ENCODE measurements at regions of chr3 and their contacts with region 1.

Region 1: GRCh38 chr3:115092220-115092791 is 54.8 kb downstream of the ZBTB20 start:
- DNase-seq: peak; percentile 55
- ATAC-seq: peak; percentile 100
- H3K4me3 ChIP-seq: no peak overlapping the region
- H3K27ac ChIP-seq: no peak overlapping the region
- H3K4me1 ChIP-seq: no peaks in the 10 kb centered on the region
- H3K27me3 ChIP-seq: 0 out of 2 replicates have a peak, but pooled peaks cover 5% of the 10 kb centered on the region
- CTCF ChIP-seq: peak; percentile 77

Region 2: DNA sequence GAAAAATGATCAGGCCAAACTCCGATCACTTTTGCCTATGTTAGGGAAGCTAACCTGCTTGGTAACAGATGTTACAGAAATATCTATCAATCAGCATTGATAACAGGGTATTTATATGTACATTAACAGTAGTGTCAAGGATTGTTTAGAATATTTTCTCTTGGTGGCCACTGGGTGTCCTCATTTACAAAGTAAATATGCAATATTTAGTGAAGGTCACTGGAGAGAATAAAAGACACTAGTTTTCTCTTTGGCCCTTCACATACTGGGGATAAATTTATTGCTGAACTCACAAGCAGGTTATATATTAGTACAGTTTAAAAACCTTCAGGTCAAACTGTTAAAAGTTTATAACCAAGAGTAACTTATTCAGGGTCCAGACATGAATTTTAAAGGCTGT is 729.5 kb before region 1 on chr3:
- CTCF ChIA-PET with region 1: no interaction called
- POLR2A ChIA-PET with region 1: no interaction called
- intact Hi-C with region 1: loop called (anchors 5 kb)
- DNase-seq: peak; percentile 37
- ATAC-seq: peak; percentile 81
- H3K4me3 ChIP-seq: no peak overlapping the region
- H3K27ac ChIP-seq: no peak overlapping the region
- H3K4me1 ChIP-seq: no peaks in the 10 kb centered on the region
- H3K27me3 ChIP-seq: peaks cover 6% of the 10 kb centered on the region
- CTCF ChIP-seq: peak; percentile 74

Region 3: GRCh38 chr3:114827495-114827894 is 264.8 kb before region 1 on chr3:
- CTCF ChIA-PET with region 1: interaction called, 6 read pairs
- POLR2A ChIA-PET with region 1: no interaction called
- intact Hi-C with region 1: loop called (anchors 1 kb)
- DNase-seq: peak; percentile 51
- ATAC-seq: peak; percentile 86
- H3K4me3 ChIP-seq: no peak overlapping the region
- H3K27ac ChIP-seq: no peak overlapping the region
- H3K4me1 ChIP-seq: no peaks in the 10 kb centered on the region
- H3K27me3 ChIP-seq: no peaks in the 10 kb centered on the region
- CTCF ChIP-seq: peak; percentile 68

Region 4: GRCh38 chr3:115147329-115148141 is 55.2 kb after region 1 on chr3:
- CTCF ChIA-PET with region 1: no interaction called
- POLR2A ChIA-PET with region 1: no interaction called
- intact Hi-C with region 1: loop called (anchors 2 kb)
- DNase-seq: peak; percentile 99
- ATAC-seq: peak; percentile 83
- H3K4me3 ChIP-seq: peak overlapping the region; percentile 84
- H3K27ac ChIP-seq: peak overlapping the region; percentile 29
- H3K4me1 ChIP-seq: peaks cover 7% of the 10 kb centered on the region; the same call in 1 of the 2 replicates
- H3K27me3 ChIP-seq: no peaks in the 10 kb centered on the region
- CTCF ChIP-seq: no peak

Region 5: GRCh38 chr3:115692887-115693524 is 600.7 kb after region 1 on chr3:
- CTCF ChIA-PET with region 1: interaction called, 4 read pairs
- POLR2A ChIA-PET with region 1: no interaction called
- intact Hi-C with region 1: loop called (anchors 1 kb)
- DNase-seq: peak; percentile 90
- ATAC-seq: peak; percentile 96
- H3K4me3 ChIP-seq: no peak overlapping the region
- H3K27ac ChIP-seq: no peak overlapping the region
- H3K4me1 ChIP-seq: no peaks in the 10 kb centered on the region
- H3K27me3 ChIP-seq: no peaks in the 10 kb centered on the region
- CTCF ChIP-seq: peak; percentile 94